ENCODE measurements at regions of chr5 and their contacts with region 1.

Region 1: GRCh38 chr5:149938791-149939358 is 5.7 kb downstream of the PDE6A start:
- DNase-seq: peak; percentile 100
- H3K4me3 Mint-ChIP-seq: peak overlapping the region; percentile 55
- H3K27ac Mint-ChIP-seq: peak overlapping the region; percentile 98
- H3K4me1 Mint-ChIP-seq: peaks cover 77% of the 10 kb centered on the region
- H3K27me3 Mint-ChIP-seq: no peaks in the 10 kb centered on the region
- CTCF ChIP-seq: no peak

Region 2: DNA sequence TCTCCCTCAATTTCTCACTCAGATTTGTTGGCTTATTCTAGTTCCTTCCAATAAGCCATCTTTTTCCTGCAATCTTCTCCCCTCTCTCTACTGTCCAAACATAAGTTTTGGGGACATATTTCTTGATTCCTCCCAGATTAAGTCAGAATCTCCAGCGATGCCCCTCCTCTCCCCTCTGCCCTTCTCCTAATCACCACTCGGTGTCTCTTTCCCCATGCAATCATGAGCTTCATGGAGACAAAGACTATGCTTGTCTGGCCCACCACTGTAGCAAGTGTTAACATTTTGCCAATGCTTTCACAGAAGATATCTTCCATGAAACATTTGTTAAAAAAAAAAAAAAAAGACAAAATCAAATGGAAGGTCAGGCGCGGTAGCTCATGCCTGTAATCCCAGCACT is 36.7 kb before region 1 on chr5:
- CTCF ChIA-PET with region 1: interaction called, 15 read pairs
- POLR2A ChIA-PET with region 1: interaction called, 72 read pairs
- intact Hi-C with region 1: loop called (anchors 2 kb)
- DNase-seq: peak; percentile 49
- H3K4me3 Mint-ChIP-seq: no peak overlapping the region
- H3K27ac Mint-ChIP-seq: peak overlapping the region; percentile 34
- H3K4me1 Mint-ChIP-seq: peaks cover 23% of the 10 kb centered on the region
- H3K27me3 Mint-ChIP-seq: no peaks in the 10 kb centered on the region
- CTCF ChIP-seq: peak; percentile 13

Region 3: GRCh38 chr5:149913436-149914419 is 25.1 kb before region 1 on chr5:
- CTCF ChIA-PET with region 1: interaction called, 24 read pairs
- POLR2A ChIA-PET with region 1: interaction called, 96 read pairs
- intact Hi-C with region 1: loop called (anchors 2 kb)
- DNase-seq: no peak
- H3K4me3 Mint-ChIP-seq: no peak overlapping the region
- H3K27ac Mint-ChIP-seq: no peak overlapping the region
- H3K4me1 Mint-ChIP-seq: peaks cover 57% of the 10 kb centered on the region
- H3K27me3 Mint-ChIP-seq: no peaks in the 10 kb centered on the region
- CTCF ChIP-seq: no peak

Region 4: GRCh38 chr5:149924486-149924885 is 14.4 kb before region 1 on chr5:
- CTCF ChIA-PET with region 1: interaction called, 12 read pairs
- POLR2A ChIA-PET with region 1: interaction called, 37 read pairs
- intact Hi-C with region 1: no loop called
- DNase-seq: no peak
- H3K4me3 Mint-ChIP-seq: no peak overlapping the region
- H3K27ac Mint-ChIP-seq: peak overlapping the region; percentile 11
- H3K4me1 Mint-ChIP-seq: peaks cover 27% of the 10 kb centered on the region
- H3K27me3 Mint-ChIP-seq: no peaks in the 10 kb centered on the region
- CTCF ChIP-seq: no peak

Region 5: GRCh38 chr5:149951135-149951749 is 12.4 kb after region 1 on chr5:
- CTCF ChIA-PET with region 1: interaction called, 105 read pairs
- POLR2A ChIA-PET with region 1: interaction called, 34 read pairs
- intact Hi-C with region 1: no loop called
- DNase-seq: no peak
- H3K4me3 Mint-ChIP-seq: no peak overlapping the region
- H3K27ac Mint-ChIP-seq: peak overlapping the region; percentile 21
- H3K4me1 Mint-ChIP-seq: peaks cover 30% of the 10 kb centered on the region
- H3K27me3 Mint-ChIP-seq: no peaks in the 10 kb centered on the region
- CTCF ChIP-seq: no peak

Measured in MCF 10A (cell line).